GM10248 (cell line): ENCODE measurements at regions of chr6 and their contacts with region 1.

Region 1: DNA sequence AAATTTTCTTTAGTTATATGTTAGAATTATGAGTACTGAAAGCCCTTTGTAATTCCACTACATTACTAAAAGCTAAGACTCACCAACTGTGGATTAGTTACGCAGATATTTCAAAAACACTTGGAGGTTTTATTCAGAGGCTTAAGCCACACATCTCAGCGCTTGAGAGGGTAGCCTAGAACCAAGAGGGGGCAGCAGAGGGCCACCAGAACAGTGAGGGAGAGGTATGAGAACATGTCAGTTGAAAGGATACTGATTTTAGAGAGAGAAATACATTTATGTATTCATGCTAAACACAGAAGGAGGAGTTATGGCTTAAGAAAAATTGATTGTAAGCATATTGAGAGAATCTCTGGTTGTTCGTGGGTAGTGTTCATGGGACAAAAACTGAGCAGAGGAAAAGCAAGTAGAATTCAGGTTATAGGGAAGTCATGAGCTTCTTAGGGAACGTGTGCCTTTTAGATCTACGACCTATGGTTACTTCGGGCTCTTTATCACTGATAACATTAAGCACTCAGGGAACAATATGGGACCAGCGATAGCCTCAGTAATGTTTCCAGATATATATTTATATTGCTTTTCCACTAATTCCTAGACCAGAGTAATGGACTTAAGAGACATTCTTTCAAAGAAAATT is 20.4 kb upstream of the SERINC1 start:
- DNase-seq: peak; percentile 60
- CTCF ChIP-seq: peak; percentile 91

Region 2: DNA sequence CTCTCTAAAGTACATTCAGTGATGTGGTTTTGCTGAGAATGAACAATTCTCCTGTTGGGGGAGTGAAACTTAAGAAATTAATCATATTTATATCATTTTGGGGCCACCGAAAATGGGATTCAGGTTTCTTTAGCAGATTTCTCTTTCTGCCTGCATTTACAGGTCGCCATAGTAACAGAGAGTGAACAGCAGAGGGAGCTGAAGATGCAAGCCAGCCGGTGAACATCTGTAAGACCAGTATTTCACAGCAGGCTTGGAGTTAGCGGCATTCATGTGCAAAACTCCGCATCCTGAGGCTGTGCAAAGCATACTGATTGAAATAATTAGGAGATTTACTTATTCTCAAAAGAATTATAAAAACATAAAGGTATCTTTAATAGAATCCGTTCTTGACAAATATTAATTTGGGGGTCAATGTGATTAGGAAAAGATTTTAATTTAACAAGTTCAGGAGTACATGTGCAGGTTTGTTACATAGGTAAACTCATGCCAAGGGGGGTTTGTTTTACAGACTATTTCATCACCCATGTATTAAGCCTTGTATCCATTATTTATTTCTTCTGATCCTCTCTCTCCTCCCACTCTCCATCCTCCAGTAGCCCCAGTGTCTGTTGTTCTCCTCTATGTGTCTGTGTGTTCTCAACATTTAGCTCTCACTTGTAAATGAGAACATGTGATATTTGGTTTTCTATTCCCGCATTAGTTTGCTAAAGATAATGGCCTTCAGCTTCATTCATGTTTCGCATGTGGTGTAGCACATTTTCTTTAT is 110.4 kb before region 1 on chr6:
- CTCF ChIA-PET with region 1: interaction called, 13 read pairs
- POLR2A ChIA-PET with region 1: no interaction called
- DNase-seq: peak; percentile 25
- CTCF ChIP-seq: peak; percentile 78

Region 3: GRCh38 chr6:122471107-122472021 is 20.7 kb before region 1 on chr6 and contains the start of gene SERINC1:
- CTCF ChIA-PET with region 1: interaction called, 22 read pairs
- POLR2A ChIA-PET with region 1: no interaction called
- DNase-seq: peak; percentile 91
- CTCF ChIP-seq: no peak

Region 4: GRCh38 chr6:122511193-122511924 is 19.3 kb after region 1 on chr6:
- CTCF ChIA-PET with region 1: interaction called, 17 read pairs
- POLR2A ChIA-PET with region 1: no interaction called
- DNase-seq: no peak
- CTCF ChIP-seq: no peak

Region 5: DNA sequence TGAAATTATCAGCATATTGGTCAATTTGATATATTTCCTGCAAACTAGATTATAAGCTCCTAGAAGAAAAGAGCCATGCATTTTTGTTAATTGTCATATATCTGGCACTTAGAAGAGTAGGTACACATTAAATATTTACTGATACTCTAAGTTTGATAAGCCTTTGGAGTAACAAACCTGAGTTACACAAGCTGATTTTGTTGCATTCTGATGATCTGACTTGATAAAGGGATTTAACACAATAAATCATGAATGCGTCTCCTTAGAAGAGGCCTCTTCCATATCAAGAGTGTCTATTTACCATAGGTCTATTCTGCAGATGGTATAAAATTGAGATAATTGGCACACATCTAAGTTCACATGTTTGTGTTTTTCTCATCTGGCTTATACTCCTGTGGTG is 28.1 kb after region 1 on chr6:
- CTCF ChIA-PET with region 1: interaction called, 17 read pairs
- POLR2A ChIA-PET with region 1: no interaction called
- DNase-seq: no peak
- CTCF ChIP-seq: no peak

Region 6: DNA sequence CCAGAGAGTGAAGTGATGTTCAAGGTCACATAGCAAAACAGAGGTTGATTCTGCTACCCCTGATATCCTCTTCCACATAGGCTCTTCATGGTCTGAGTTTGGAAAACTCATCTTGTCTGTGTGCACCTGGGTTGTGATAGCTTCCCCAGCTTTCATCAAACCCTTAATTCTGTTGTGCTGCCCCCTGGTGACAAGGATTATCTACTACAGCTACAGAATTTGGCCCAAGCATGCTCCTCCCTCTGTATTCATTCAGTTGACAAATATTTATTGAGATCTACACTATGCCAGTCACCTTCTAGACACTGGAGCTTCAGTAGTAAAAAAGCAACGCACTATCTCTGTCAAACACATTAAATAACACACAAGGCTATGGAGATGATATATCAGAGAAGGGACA is 347.4 kb after region 1 on chr6:
- CTCF ChIA-PET with region 1: interaction called, 13 read pairs
- POLR2A ChIA-PET with region 1: no interaction called
- DNase-seq: peak; percentile 67
- CTCF ChIP-seq: peak; percentile 70